Adrenal gland (tissue), 19 donors: ENCODE measurements at regions of chr5 and their contacts with region 1.

Region 1: DNA sequence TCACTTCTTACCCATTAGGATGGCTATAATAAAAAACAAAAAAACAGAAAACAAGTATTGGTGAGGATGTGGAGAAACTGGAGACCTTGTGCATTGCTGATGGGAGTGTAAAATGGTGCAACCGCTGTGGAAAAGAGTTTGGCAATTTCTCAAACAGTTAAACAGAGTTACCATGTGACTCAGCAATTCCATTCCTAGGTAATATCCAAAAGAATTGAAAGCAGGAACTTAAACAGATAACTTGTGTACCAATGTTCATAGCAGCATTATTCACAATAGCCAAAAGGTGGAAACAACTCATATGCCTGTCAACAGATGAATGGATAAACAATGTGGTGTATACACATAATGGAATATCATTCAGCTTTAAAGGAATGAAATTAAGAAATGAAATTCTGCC is 28.9 kb downstream of the DCP2 start:
- DNase-seq: no peak
- H3K4me3 ChIP-seq: no peak overlapping the region
- H3K27ac ChIP-seq: no peak overlapping the region
- H3K4me1 ChIP-seq: peaks cover 7 to 8% of the 10 kb centered on the region in 2 donors
- H3K27me3 ChIP-seq: no peaks in the 10 kb centered on the region
- CTCF ChIP-seq: no peak
- POLR2A ChIP-seq: no peak

Region 2: GRCh38 chr5:112921833-112922817 is 83.3 kb before region 1 on chr5 and contains the start of gene REEP5:
- intact Hi-C with region 1: no loop called
- DNase-seq: peak; percentile 80 to 91 (median 87)
- H3K4me3 ChIP-seq: peak within 1 kb of the TSS; percentile 26 to 98 (median 81)
- H3K27ac ChIP-seq: peak within 1 kb of the TSS; percentile 79 to 98 (median 97)
- H3K4me1 ChIP-seq: peaks cover under 1 to 43% of the 10 kb centered on the region in 2 donors
- H3K27me3 ChIP-seq: no peaks in the 10 kb centered on the region
- CTCF ChIP-seq: peak; percentile 25 to 95 (median 72)
- POLR2A ChIP-seq: peak; percentile 94 to 97
- total RNA-seq, gene REEP5: 84.6 to 198 (median 167) TPM

Region 3: DNA sequence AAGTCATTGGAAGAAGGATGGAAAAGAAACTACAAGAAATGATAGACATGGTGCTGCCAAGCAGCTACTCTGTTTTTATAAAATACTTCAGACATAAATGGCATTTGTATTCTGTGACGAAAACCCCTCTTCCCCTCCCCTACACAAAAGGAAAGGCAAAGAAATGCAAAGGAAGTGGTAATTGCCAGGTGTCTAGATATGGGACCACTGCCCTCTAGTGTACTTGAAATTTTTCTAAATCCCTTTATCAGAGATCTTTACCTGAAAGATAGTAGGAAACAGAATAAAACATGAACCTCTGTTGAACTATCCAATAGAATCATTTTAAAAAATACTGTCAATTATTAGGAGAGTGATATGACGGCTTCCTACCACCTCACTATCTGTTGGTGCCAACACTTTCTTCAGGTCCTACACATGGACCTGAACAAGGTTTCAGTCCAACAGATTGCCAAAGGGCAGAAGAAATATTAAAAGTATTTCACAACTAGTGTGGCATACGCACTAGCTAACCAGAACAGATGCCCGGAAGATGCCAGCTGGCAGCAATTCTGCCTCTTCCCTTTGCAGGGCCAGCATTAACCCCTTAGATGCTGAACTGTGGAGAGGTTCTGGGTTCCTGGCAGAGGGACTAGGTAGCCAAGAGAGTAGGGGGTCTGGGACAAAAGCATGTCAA is 325.2 kb after region 1 on chr5:
- intact Hi-C with region 1: loop called in 1 of 2 experiments (anchors 10 kb)
- DNase-seq: peak; percentile 30 to 76 (median 64)
- H3K4me3 ChIP-seq: no peak overlapping the region
- H3K27ac ChIP-seq: peak overlapping the region in 1 of 5 donors; percentile 19
- H3K4me1 ChIP-seq: peaks cover 5 to 9% of the 10 kb centered on the region in 2 donors
- H3K27me3 ChIP-seq: no peaks in the 10 kb centered on the region
- CTCF ChIP-seq: peak in 5 of 6 experiments; percentile 9 to 45 (median 38)
- POLR2A ChIP-seq: no peak

Region 4: DNA sequence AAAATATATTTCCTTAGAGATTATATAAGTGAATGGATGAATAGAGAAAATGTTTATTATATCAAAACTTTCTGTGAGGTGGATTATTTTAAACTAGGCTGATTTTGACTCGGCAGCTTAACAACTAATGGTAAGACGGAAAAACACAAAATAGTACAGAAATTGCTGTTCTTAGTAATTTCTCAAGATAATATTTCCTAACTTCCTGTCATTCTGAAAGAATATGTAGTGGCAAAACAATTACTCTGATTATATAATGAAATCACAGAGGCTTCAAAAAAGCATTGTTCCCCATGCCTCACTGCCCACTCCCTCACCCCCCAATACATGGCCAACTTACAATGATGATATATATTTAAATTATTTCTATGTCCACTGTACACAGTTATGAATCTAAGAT is 593.5 kb after region 1 on chr5:
- intact Hi-C with region 1: loop called in 1 of 2 experiments (anchors 10 kb)
- DNase-seq: no peak
- H3K4me3 ChIP-seq: no peak overlapping the region
- H3K27ac ChIP-seq: no peak overlapping the region
- H3K4me1 ChIP-seq: no peaks in the 10 kb centered on the region
- H3K27me3 ChIP-seq: no peaks in the 10 kb centered on the region
- CTCF ChIP-seq: no peak
- POLR2A ChIP-seq: no peak